ENCODE measurements at regions of chr3 and their contacts with region 1.

Region 1: DNA sequence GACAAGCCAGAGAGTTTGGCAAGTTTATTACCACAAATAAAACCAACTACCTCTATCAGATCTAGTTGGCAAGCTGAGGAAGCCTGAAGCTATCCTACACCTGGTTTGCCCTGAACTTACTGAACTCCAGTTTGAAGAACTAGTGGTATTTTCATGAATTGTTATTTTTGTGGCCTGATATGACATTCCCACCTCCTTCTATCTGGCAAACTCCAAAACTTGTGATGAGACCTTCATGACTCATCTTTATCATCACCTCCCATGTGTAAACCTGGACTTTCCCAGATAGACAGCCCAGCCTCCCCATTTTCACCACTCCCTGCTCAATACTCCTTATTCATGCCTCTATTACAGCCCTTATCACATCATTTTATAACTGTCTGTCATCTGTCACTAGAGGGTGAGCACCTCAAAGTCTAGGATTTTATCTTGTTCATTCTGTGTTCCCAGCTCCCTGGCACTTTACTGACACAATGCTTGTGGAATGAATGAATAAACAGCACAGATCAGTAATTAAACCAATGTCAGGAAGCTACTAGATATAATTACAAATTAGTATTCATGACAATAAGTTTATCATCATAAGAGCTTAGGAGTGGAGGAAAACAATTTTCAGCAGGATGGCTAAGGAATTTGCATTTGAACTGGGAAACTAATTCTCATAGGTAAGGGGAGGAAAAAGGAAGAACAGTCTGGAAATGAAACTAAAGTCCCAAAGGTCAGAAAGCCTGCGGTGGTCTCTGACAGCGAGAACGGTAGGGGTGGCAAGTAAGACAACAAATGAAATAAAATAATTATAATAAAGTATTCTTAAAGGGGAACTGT is 13.2 kb upstream of the TRANK1 start:
- DNase-seq: peak; percentile 56 to 58
- ATAC-seq: peak; percentile 63 to 76; a peak in 5 of 6 replicates
- H3K4me3 ChIP-seq: peak overlapping the region; percentile 14; the same call in 1 of the 3 replicates
- H3K27ac ChIP-seq: peak overlapping the region; percentile 1 to 52; a peak in 2 of 6 replicates
- H3K4me1 ChIP-seq: peaks cover 14% of the 10 kb centered on the region
- CTCF ChIP-seq: no peak
- EP300 ChIP-seq: no peak
- POLR2A ChIP-seq: no peak
- RAD21 ChIP-seq: no peak

Region 2: DNA sequence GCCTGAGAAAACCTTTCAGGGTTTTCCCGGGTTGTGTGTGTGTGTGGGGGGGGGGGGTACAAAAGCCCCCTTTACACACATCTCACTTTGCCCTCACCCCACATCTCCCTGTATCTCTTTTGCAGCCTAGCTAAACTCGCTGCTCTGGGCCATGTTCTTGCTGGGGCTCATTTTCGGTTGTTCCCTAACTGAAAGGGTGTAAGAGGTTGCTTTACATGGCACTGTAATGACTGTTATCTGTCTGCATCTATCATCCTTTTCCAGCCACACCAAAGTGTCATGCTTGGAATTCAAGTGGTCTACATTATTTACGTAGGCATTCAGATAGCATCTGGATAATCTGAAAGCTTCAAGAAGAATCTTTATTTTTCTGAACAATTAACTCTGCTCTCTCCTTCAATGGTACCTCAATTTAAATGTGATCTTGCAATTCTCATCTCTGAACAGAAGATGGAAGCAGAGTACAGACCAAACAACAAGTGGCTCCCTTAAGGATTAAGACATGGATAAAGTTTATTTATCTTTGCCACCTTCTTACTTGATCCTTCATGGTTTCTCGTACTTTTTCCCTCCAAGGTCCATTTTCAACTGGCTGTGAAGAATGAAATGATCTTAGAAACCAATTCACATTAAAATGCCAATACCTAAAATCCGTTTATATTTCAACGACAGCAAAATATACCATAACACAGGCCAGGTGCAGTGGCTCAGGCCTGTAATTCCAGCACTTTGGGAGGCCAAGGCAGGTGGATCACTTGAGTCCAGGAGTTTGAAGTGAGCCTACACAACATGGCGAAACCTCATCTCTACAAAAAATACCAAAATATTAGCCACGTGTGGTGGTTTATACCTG is 228.6 kb before region 1 on chr3:
- CTCF ChIA-PET with region 1: interaction called, 20 read pairs
- POLR2A ChIA-PET with region 1: no interaction called
- DNase-seq: peak; percentile 47 to 61
- ATAC-seq: peak; percentile 80 to 91; a peak in 5 of 6 replicates
- H3K4me3 ChIP-seq: no peak overlapping the region
- H3K27ac ChIP-seq: no peak overlapping the region
- H3K4me1 ChIP-seq: no peaks in the 10 kb centered on the region
- CTCF ChIP-seq: peak; percentile 90
- EP300 ChIP-seq: no peak
- POLR2A ChIP-seq: no peak
- RAD21 ChIP-seq: peak; percentile 90 to 92

Region 3: DNA sequence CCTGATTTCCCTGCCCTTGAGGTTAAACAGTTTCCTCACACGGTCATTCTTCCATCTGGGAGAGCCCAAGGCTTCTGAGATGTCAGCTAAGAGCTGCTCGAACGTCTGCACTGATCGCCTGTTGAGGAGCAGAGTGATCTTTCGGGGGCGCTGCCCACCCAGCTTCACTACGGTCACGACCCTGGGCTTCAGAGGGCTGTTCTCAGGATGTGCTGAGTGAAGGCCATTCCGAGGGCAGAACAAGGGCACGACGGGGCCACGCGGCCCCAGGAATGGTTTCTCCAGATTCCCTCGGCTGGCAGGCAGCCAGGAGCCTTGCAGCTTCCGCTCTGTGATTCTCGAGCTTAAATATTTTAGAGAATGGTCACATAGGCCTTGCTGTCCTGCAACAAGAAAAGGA is 219.4 kb before region 1 on chr3:
- CTCF ChIA-PET with region 1: interaction called, 12 read pairs
- POLR2A ChIA-PET with region 1: no interaction called
- DNase-seq: no peak
- ATAC-seq: no peak
- H3K4me3 ChIP-seq: no peak overlapping the region
- H3K27ac ChIP-seq: no peak overlapping the region
- H3K4me1 ChIP-seq: no peaks in the 10 kb centered on the region
- CTCF ChIP-seq: no peak
- EP300 ChIP-seq: no peak
- POLR2A ChIP-seq: no peak
- RAD21 ChIP-seq: no peak

Region 4: DNA sequence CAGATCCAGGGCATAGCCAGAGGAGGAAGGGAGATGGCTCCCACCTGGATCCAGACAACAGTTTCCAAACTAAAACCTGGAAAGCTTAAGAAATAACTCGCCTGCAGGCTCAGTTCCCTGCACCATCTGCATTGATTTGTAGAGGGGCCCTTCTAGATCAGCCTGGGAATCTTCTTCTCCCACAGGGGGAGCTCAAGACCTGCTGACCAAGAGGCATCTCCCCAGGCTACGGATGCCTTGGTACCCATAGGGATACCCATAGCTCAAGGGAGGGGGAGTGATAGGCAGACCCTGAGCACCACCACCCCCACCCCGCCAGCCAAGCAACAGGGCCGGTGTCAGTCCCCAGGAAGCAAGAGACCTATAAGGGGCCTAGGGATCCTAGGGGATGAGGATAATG is 165.7 kb before region 1 on chr3:
- CTCF ChIA-PET with region 1: interaction called, 13 read pairs
- POLR2A ChIA-PET with region 1: no interaction called
- DNase-seq: peak; percentile 8 to 37
- ATAC-seq: peak; percentile 92 to 98
- H3K4me3 ChIP-seq: no peak overlapping the region
- H3K27ac ChIP-seq: no peak overlapping the region
- H3K4me1 ChIP-seq: no peaks in the 10 kb centered on the region
- CTCF ChIP-seq: peak; percentile 46
- EP300 ChIP-seq: no peak
- POLR2A ChIP-seq: no peak
- RAD21 ChIP-seq: peak; percentile 62 to 79

Region 5: DNA sequence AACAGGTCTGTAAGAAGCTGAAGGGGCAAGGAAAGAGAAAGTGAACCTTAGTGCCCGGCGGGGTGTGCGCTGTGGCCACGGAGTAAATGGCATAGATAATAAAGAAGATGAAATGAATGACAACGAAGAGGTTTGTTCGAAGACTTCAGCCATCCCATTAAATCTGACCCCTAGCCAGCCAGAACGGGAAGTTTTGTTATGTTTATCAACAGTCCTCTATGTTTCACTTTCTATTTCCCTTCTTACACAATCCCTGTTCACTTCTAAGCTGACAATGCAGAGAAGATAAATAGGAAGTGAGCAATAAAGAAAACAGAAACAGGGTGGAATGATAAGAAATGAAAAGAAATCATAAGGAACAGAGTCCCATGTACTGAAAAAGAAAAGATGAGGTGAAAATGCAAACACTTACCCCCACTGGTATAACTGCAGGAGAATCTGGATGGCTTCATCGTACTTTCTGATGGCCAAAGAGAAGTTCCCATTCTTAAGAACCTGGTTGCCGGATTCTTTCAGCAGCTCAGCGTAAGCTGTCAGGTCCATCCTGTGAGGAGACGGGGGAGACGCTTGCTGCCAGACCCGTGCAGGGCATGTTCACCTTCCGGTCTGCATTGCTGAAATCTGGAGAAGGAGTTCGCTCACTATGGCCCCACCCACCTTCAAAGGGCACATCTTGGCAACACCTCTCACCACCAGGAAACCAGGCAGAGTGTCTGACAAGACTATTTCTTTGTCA is 50.0 kb before region 1 on chr3:
- CTCF ChIA-PET with region 1: interaction called, 23 read pairs
- POLR2A ChIA-PET with region 1: no interaction called
- DNase-seq: peak; percentile 66 to 79
- ATAC-seq: peak; percentile 88 to 92
- H3K4me3 ChIP-seq: peak overlapping the region; percentile 62
- H3K27ac ChIP-seq: peak overlapping the region; percentile 54 to 77
- H3K4me1 ChIP-seq: peaks cover 20% of the 10 kb centered on the region; the same call in 2 of the 3 replicates
- CTCF ChIP-seq: no peak
- EP300 ChIP-seq: no peak
- POLR2A ChIP-seq: no peak
- RAD21 ChIP-seq: no peak

Region 6: GRCh38 chr3:36944012-36944640 is 13.9 kb before region 1 on chr3:
- CTCF ChIA-PET with region 1: interaction called, 13 read pairs
- POLR2A ChIA-PET with region 1: interaction called, 4 read pairs
- DNase-seq: peak; percentile 44 to 49
- ATAC-seq: peak; percentile 84 to 87
- H3K4me3 ChIP-seq: peak overlapping the region; percentile 55
- H3K27ac ChIP-seq: peak overlapping the region; percentile 70 to 86
- H3K4me1 ChIP-seq: no peaks in the 10 kb centered on the region
- CTCF ChIP-seq: no peak
- EP300 ChIP-seq: no peak
- POLR2A ChIP-seq: peak; percentile 18
- RAD21 ChIP-seq: no peak

Region 7: GRCh38 chr3:36973774-36974173 is 15.7 kb after region 1 on chr3:
- CTCF ChIA-PET with region 1: interaction called, 15 read pairs
- POLR2A ChIA-PET with region 1: no interaction called
- DNase-seq: no peak
- ATAC-seq: no peak
- H3K4me3 ChIP-seq: no peak overlapping the region
- H3K27ac ChIP-seq: no peak overlapping the region
- H3K4me1 ChIP-seq: peaks cover 9% of the 10 kb centered on the region
- CTCF ChIP-seq: no peak
- EP300 ChIP-seq: no peak
- POLR2A ChIP-seq: no peak
- RAD21 ChIP-seq: no peak

Region 8: DNA sequence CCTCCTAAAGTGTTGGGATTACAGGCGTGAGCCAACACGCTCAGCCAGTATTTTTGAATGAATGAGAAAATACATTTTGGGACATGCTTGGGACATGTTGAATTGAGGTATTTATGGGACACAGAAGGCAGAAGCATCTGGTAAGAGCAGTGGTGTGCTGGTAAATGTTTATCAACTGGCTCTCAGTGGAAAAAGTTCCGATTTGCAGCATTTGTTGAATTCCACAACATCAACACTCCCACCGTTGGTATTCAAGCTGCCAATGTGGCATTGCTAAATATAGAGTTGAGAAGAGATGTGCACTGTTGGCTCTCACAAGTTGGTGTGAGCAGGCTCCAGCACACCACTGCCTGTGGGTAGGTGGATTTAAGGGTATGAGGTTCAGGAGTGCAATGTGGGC is 252.2 kb after region 1 on chr3:
- CTCF ChIA-PET with region 1: no interaction called
- POLR2A ChIA-PET with region 1: no interaction called
- DNase-seq: no peak
- ATAC-seq: no peak; a peak in 1 of 6 replicates
- H3K4me3 ChIP-seq: no peak overlapping the region
- H3K27ac ChIP-seq: peak overlapping the region; percentile 39 to 48; a peak in 3 of 6 replicates
- H3K4me1 ChIP-seq: peaks cover 24% of the 10 kb centered on the region
- CTCF ChIP-seq: no peak
- EP300 ChIP-seq: no peak
- POLR2A ChIP-seq: no peak
- RAD21 ChIP-seq: no peak

Measured in A549 (cell line).